HCT116 (cell line): ENCODE measurements at regions of chr2 and their contacts with region 1.

Region 1: DNA sequence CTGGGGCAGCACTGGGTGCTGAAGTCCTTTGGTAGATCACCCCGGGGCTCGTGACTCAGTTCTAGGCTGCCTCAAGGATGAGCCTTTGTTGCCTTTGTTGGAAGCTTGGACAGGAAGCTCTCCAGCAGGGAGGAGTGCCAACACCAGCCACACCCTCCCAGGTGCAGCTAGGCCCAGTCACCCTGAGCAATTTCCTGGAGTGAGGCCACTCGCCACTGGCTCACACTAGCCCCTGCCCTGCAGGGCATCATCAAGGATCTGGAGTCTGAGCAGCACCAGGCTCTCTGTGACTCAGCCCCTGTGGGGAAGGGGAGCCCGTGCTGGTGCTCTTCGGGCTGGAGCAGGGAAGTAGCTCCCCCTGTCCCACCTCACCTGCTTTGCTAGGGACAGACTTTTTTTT is 6.7 kb upstream of the SDC1 start:
- DNase-seq: peak; percentile 90
- ATAC-seq: peak; percentile 91
- H3K4me3 ChIP-seq: peak overlapping the region in 1 of 2 experiments; percentile 25; a peak in 2 of 4 replicates
- H3K27ac ChIP-seq: peak overlapping the region; percentile 58
- H3K4me1 ChIP-seq: peaks cover 19 to 51% of the 10 kb centered on the region in 2 experiments
- H3K27me3 ChIP-seq: no peaks in the 10 kb centered on the region
- CTCF ChIP-seq: no peak
- POLR2A ChIP-seq: peak; percentile 29
- RAD21 ChIP-seq: no peak

Region 2: DNA sequence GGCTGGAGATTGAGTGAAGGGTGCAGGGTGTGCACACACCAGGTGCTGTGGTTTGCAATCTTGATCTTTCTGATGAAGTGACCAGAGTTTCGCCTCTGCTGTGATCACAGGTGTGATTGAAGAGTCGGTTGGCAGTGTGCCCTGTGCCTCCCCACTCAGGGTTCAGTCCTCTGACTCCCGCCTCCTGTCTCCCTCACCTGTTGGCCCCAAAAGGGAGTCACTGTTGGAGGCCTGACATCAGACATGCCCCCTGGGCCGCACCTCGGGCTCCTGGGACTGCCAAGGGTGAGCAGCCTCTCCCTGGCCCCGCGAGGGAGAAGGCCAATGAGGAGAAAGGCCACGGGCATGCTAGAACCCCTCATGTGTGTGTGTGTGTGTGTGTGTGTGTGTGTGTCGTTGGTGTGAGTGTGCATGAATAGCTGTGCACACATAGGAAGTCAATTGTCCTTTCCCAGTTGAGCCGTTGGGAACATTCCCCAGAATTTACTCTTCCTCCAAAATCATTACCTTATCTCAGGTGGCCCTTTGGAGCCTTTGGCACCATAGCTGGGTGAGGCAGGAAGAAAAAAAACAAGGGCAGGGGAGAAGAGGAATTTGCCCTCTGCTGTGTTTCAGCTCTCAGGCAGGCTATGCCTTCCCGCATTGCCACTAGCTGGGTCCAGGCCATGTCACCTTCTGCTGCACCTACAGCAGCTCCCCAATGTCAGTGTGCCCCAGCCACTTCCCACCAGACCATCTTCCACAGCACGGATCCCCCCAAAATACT is 102.1 kb before region 1 on chr2:
- CTCF ChIA-PET with region 1: no interaction called
- POLR2A ChIA-PET with region 1: no interaction called
- RAD21 ChIA-PET with region 1: interaction called in 1 of 2 experiments, 3 read pairs
- intact Hi-C with region 1: loop called (anchors 5 kb)
- DNase-seq: no peak
- ATAC-seq: no peak
- H3K4me3 ChIP-seq: no peak overlapping the region
- H3K27ac ChIP-seq: no peak overlapping the region
- H3K4me1 ChIP-seq: no peaks in the 10 kb centered on the region
- H3K27me3 ChIP-seq: no peaks in the 10 kb centered on the region
- CTCF ChIP-seq: no peak
- POLR2A ChIP-seq: no peak
- RAD21 ChIP-seq: no peak